ENCODE measurements at regions of chr7 and their contacts with region 1.

Region 1: DNA sequence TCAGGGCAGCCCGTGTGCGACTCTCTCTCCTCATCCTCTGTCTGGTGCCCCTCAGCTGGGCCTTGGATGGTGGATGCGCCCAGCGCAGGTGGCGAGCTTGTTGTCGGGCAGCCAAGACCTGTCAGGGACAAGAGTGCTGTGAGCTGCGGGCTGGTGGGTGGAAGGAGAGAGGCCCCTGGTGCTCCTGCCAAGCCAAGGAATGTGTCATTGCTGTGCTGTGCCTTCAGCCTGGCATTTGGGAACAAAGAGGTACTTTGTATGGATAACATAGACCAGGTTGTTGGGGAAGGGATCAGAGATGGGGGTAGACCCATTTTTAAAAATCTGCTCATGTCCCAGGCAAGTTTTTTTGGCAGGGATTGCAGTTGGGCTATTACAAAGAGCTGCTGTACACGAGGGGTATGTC is 120.9 kb downstream of the PKD1L1 start:
- DNase-seq: no peak
- ATAC-seq: no peak
- H3K4me3 ChIP-seq: no peak overlapping the region
- H3K27ac ChIP-seq: no peak overlapping the region
- H3K4me1 ChIP-seq: no peaks in the 10 kb centered on the region
- H3K27me3 ChIP-seq: no peaks in the 10 kb centered on the region
- CTCF ChIP-seq: no peak

Region 2: DNA sequence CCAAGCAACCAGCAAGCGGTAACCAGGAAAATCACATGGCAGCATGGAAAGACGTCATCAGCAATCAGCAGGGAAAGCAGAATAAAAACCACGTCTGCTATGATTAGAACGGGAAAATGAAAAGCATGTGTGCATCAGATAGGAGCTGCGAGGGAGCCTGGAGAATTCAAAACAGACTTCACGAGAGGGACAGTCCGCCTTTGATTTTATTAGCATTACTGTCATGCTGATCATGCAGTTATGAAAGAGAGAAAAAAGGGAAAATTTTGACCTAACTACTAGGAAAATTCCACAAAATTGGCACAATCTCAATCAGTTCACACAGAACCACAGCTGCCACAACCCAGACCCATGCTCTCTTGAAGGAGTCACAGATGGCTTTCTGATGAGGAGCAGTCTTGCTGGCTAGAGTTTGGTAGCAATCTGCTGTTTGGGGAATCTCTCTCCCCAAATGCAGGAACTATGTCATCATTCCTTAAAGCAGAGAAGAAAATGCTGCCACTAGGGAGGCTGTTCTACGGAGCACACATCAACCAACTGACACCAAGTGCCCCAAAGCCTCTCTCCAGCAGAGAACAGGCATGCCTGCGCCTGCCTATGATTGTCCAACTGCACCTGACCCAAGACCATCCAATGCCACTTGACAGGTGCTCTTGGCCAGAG is 541.4 kb before region 1 on chr7:
- intact Hi-C with region 1: loop called in 1 of 2 experiments (anchors 10 kb)
- DNase-seq: no peak
- ATAC-seq: peak; percentile 22
- H3K4me3 ChIP-seq: no peak overlapping the region
- H3K27ac ChIP-seq: peak overlapping the region in 1 of 2 donors; percentile 29
- H3K4me1 ChIP-seq: peaks cover 0 to 3% of the 10 kb centered on the region in 2 donors
- H3K27me3 ChIP-seq: no peaks in the 10 kb centered on the region
- CTCF ChIP-seq: no peak

Region 3: DNA sequence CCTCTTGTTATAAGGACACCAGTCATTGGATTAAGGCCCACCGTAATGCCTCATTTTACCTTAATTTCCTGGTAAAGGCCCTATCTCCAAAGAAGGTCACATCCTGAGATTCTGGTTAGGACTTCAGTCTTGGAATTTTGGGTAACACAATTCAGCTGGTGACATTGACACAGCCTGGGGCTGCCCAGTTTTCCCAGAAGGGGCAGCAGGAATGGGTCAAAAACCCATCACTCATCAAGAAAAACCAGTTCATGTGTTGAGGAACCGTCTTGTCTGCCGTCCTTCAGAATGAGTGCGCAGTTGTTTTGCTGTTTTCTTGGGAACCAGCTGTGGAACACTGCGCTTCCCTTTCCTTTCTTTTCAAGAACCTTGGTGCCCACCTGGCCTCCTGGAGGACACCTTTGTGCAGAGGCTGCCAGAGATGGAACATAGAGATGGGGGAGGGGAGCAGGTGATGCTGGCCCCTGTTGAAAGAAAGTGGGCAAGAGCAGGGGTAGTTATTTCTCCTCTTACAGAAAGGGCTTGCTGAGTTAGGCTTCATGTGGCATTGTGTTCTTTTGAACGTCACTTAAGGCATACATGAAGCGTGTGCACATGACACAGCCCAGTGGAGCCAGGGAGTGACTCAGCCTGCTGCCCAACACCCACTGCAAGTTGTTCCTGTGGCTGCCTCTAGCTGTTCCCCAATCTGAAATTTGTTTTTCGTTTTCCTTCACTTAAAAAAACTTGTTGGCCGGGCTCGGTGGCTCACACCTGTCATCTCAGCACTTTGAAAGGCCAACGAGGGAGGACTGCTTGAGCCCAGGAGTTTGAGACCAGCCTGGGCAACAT is 158.1 kb before region 1 on chr7:
- intact Hi-C with region 1: no loop called
- DNase-seq: peak in 2 of 4 donors; percentile 45 to 92
- ATAC-seq: peak; percentile 97
- H3K4me3 ChIP-seq: no peak overlapping the region
- H3K27ac ChIP-seq: peak overlapping the region; percentile 60 to 78
- H3K4me1 ChIP-seq: peaks cover 0 to 22% of the 10 kb centered on the region in 2 donors
- H3K27me3 ChIP-seq: no peaks in the 10 kb centered on the region
- CTCF ChIP-seq: no peak

Region 4: DNA sequence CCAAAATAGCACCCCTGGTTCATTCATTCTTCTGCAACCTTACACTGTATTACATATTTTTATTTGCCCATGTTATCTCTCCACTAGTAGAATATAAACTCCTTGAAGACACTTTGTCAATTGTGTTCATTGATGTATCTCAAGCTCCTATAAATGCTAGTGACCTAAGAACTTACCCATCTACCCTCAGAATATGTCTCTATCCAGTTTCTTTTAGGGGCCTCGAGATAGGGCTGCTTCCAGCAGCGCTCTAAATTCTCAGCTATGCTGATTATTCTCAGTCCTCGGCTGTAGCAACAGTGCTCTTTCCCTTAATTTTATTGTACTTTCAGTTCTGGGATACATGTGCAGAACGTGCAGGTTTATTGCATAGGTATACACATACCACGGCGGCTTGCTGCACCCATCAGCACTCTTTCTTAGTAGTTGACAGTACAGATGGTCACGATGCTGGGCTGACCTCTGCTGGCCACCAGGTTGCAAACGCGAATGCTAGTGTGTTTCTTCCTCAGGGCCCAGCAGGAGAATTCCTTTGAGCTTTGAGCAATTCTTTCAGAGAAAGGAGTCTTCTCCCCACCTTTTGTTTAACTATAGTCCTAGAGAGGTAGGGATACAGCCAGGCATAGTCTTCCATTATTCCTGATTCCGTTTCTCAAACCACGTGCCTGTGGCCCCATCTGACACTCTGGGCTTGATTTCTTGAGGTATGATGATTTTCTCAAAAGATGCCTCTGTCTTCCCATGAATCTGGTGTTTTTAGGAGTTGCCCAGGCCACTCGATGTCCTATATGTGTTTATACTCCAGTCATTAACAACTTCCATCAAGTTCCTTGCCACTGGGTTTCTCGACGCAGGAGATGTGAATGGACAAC is 1047.9 kb after region 1 on chr7:
- intact Hi-C with region 1: no loop called
- DNase-seq: peak; percentile 29 to 74 (median 52)
- ATAC-seq: peak; percentile 93
- H3K4me3 ChIP-seq: no peak overlapping the region
- H3K27ac ChIP-seq: no peak overlapping the region
- H3K4me1 ChIP-seq: no peaks in the 10 kb centered on the region
- H3K27me3 ChIP-seq: no peaks in the 10 kb centered on the region
- CTCF ChIP-seq: peak; percentile 34 to 46

Measured in left lung (tissue), 14 donors.